ENCODE measurements at regions of chr11 and their contacts with region 1.

Region 1: GRCh38 chr11:45102810-45103621 is 43.4 kb upstream of the PRDM11 start:
- DNase-seq: peak; percentile 90
- H3K4me3 ChIP-seq: peak overlapping the region in 2 of 8 donors; percentile 4 to 54
- H3K27ac ChIP-seq: peak overlapping the region in 5 of 8 donors; percentile 47 to 78 (median 57)
- H3K4me1 ChIP-seq: peaks cover 8 to 24% (median 22%) of the 10 kb centered on the region in 6 donors
- H3K27me3 ChIP-seq: peaks cover 0 to 24% (median 0%) of the 10 kb centered on the region in 7 donors
- CTCF ChIP-seq: peak; percentile 89 to 99 (median 96)
- POLR2A ChIP-seq: no peak

Region 2: DNA sequence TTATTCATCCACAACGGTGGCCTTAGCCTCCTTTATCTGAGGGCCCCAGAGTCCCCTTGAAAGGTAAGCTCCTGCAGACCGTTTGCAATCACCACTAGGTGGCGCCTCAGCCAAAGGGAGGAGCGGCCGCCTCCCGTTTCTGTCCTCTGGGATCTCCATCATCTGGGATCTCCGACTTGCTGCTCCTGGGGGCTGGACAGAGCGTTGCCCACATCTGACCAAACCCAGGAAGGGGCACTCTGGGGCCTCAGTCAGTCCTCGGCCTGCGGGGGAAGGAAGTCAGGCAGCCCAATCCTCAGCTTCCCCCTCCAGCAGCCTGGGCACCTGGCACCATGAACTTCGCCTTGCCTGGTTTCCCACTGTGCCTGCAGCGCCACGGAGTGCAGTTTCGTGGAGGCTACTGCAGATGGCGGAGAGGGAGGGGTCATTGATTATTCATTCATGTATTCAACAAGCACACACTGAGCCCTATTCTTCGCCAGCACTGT is 175.8 kb before region 1 on chr11:
- intact Hi-C with region 1: loop called (anchors 5 kb)
- DNase-seq: peak; percentile 90
- H3K4me3 ChIP-seq: no peak overlapping the region
- H3K27ac ChIP-seq: no peak overlapping the region
- H3K4me1 ChIP-seq: peaks cover 0 to 10% (median 7%) of the 10 kb centered on the region in 6 donors
- H3K27me3 ChIP-seq: no peaks in the 10 kb centered on the region
- CTCF ChIP-seq: peak; percentile 59 to 92 (median 84)
- POLR2A ChIP-seq: no peak

Region 3: GRCh38 chr11:44936525-44936924 is 166.5 kb before region 1 on chr11:
- intact Hi-C with region 1: loop called (anchors 5 kb)
- DNase-seq: peak; percentile 89
- H3K4me3 ChIP-seq: no peak overlapping the region
- H3K27ac ChIP-seq: peak overlapping the region in 2 of 8 donors; percentile 3 to 75
- H3K4me1 ChIP-seq: peaks cover 9 to 58% (median 49%) of the 10 kb centered on the region in 6 donors
- H3K27me3 ChIP-seq: no peaks in the 10 kb centered on the region
- CTCF ChIP-seq: peak; percentile 82 to 99 (median 97)
- POLR2A ChIP-seq: no peak

Region 4: GRCh38 chr11:44989831-44990566 is 113.0 kb before region 1 on chr11:
- intact Hi-C with region 1: no loop called
- DNase-seq: no peak
- H3K4me3 ChIP-seq: no peak overlapping the region
- H3K27ac ChIP-seq: no peak overlapping the region
- H3K4me1 ChIP-seq: peaks cover 0 to 15% (median 7%) of the 10 kb centered on the region in 6 donors
- H3K27me3 ChIP-seq: no peaks in the 10 kb centered on the region
- CTCF ChIP-seq: no peak
- POLR2A ChIP-seq: no peak

Measured in spleen (tissue), 13 donors.